Posterior cingulate gyrus (tissue), 11 donors: ENCODE measurements at regions of chr10 and their contacts with region 1.

Region 1: GRCh38 chr10:132575356-132576201 is 38.0 kb downstream of the INPP5A start:
- DNase-seq: peak in 2 of 10 donors; percentile 39 to 77

Region 2: GRCh38 chr10:132458593-132459300 is 116.8 kb before region 1 on chr10:
- intact Hi-C with region 1: loop called (anchors 1 kb)
- DNase-seq: peak in 8 of 10 donors; percentile 34 to 94 (median 74)

Region 3: GRCh38 chr10:132497023-132497680 is 78.4 kb before region 1 on chr10:
- intact Hi-C with region 1: no loop called
- DNase-seq: peak in 3 of 10 donors; percentile 53 to 79 (median 54)